ENCODE measurements at regions of chr17 and their contacts with region 1.

Region 1: GRCh38 chr17:39450847-39451581 is at the start of gene MED1:
- DNase-seq: peak; percentile 97 to 99
- H3K4me3 ChIP-seq: peak within 1 kb of the TSS; percentile 83
- H3K4me3 Mint-ChIP-seq: peak within 1 kb of the TSS; percentile 98
- H3K27ac Mint-ChIP-seq: peak within 1 kb of the TSS; percentile 97
- H3K4me1 ChIP-seq: peaks cover 4% of the 10 kb centered on the region; the same call in 1 of the 2 replicates
- H3K4me1 Mint-ChIP-seq: peaks cover 7% of the 10 kb centered on the region
- H3K27me3 ChIP-seq: no peaks in the 10 kb centered on the region
- H3K27me3 Mint-ChIP-seq: no peaks in the 10 kb centered on the region
- CTCF ChIP-seq: no peak
- total RNA-seq, gene MED1: 58.9 and 62.2 TPM in 2 replicates

Region 2: GRCh38 chr17:39401412-39402243 is 49.4 kb before region 1 on chr17 and contains the start of gene FBXL20:
- CTCF ChIA-PET with region 1: no interaction called
- POLR2A ChIA-PET with region 1: interaction called, 4 read pairs
- intact Hi-C with region 1: loop called (anchors 5 kb)
- DNase-seq: peak; percentile 93
- H3K4me3 ChIP-seq: peak within 1 kb of the TSS; percentile 100
- H3K4me3 Mint-ChIP-seq: peak within 1 kb of the TSS; percentile 99
- H3K27ac Mint-ChIP-seq: peak within 1 kb of the TSS; percentile 81
- H3K4me1 ChIP-seq: peaks cover 10% of the 10 kb centered on the region; the same call in 1 of the 2 replicates
- H3K4me1 Mint-ChIP-seq: peaks cover 12% of the 10 kb centered on the region
- H3K27me3 ChIP-seq: no peaks in the 10 kb centered on the region
- H3K27me3 Mint-ChIP-seq: no peaks in the 10 kb centered on the region
- CTCF ChIP-seq: no peak
- total RNA-seq, gene FBXL20: 11.2 and 12.6 TPM in 2 replicates

Region 3: GRCh38 chr17:39461113-39461925 is 10.3 kb after region 1 on chr17 and contains the start of gene CDK12:
- CTCF ChIA-PET with region 1: interaction called, 15 read pairs
- POLR2A ChIA-PET with region 1: interaction called, 129 read pairs
- intact Hi-C with region 1: loop called (anchors 1 kb)
- DNase-seq: peak; percentile 97 to 99
- H3K4me3 ChIP-seq: peak within 1 kb of the TSS; percentile 83
- H3K4me3 Mint-ChIP-seq: peak within 1 kb of the TSS; percentile 84
- H3K27ac Mint-ChIP-seq: peak within 1 kb of the TSS; percentile 95
- H3K4me1 ChIP-seq: no peaks in the 10 kb centered on the region
- H3K4me1 Mint-ChIP-seq: peaks cover 7% of the 10 kb centered on the region
- H3K27me3 ChIP-seq: no peaks in the 10 kb centered on the region
- H3K27me3 Mint-ChIP-seq: no peaks in the 10 kb centered on the region
- CTCF ChIP-seq: no peak
- total RNA-seq, gene CDK12: 85.5 and 86.6 TPM in 2 replicates

Region 4: DNA sequence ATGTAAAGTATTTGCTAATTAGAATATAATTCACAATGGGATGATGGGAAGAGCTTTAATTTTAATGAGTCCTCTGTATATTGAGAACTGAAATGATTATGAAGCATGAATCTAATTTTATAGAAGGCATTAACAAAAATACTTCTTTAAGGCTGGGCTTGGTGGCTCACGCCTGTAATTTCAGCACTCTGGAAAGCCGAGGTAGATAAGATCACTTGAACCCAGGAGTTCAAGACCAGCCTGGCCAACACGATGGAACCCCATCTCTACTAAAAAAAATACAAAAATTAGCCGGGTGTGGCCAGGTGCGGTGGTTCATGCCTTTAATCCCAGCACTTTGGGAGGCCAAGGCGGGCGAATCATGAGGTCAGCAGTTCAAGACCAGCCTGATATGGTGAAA is 22.3 kb after region 1 on chr17:
- CTCF ChIA-PET with region 1: no interaction called
- POLR2A ChIA-PET with region 1: no interaction called
- intact Hi-C with region 1: no loop called
- DNase-seq: peak in 1 of 2 experiments; percentile 9
- H3K4me3 ChIP-seq: no peak overlapping the region
- H3K4me3 Mint-ChIP-seq: no peak overlapping the region
- H3K27ac Mint-ChIP-seq: no peak overlapping the region
- H3K4me1 ChIP-seq: no peaks in the 10 kb centered on the region
- H3K4me1 Mint-ChIP-seq: no peaks in the 10 kb centered on the region
- H3K27me3 ChIP-seq: no peaks in the 10 kb centered on the region
- H3K27me3 Mint-ChIP-seq: no peaks in the 10 kb centered on the region
- CTCF ChIP-seq: no peak

Region 5: GRCh38 chr17:39517224-39517623 is 66.2 kb after region 1 on chr17:
- CTCF ChIA-PET with region 1: no interaction called
- POLR2A ChIA-PET with region 1: no interaction called
- intact Hi-C with region 1: no loop called
- DNase-seq: no peak
- H3K4me3 ChIP-seq: no peak overlapping the region
- H3K4me3 Mint-ChIP-seq: no peak overlapping the region
- H3K27ac Mint-ChIP-seq: no peak overlapping the region
- H3K4me1 ChIP-seq: no peaks in the 10 kb centered on the region
- H3K4me1 Mint-ChIP-seq: no peaks in the 10 kb centered on the region
- H3K27me3 ChIP-seq: no peaks in the 10 kb centered on the region
- H3K27me3 Mint-ChIP-seq: no peaks in the 10 kb centered on the region
- CTCF ChIP-seq: no peak